Right cardiac atrium (tissue), 5 donors: ENCODE measurements at regions of chrX and their contacts with region 1.

Region 1: DNA sequence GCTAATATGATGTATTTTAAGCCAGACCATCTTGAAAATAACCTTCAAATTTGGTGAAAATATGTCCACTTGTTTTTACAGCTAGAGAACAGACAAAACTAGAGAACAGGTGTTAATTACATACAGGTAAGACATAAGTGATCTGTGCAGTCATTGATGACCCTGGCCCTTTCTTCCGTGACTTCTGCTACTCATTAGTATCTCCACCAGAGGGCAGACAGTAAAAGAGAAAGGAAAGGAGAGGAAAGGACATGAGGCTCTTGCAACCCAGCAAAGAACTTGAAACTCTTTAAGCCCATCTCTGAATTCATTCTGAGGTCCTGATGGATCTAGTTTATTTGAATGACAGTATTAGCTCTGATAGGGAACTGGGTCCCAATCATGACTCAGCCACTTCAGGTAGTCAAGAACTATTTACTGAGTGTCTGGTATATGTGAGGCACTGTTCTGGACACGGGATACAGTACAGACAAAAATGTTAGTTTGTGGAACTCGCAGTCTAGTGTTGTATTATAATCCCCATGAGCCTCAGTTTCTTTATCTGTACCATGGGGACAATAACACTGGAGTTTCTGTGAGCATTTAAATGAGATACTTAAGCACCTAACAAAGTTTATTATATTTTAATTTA is 121.0 kb upstream of the TEX13D start:
- DNase-seq: no peak
- ATAC-seq: peak in 1 of 2 donors; percentile 56
- H3K4me3 ChIP-seq: no peak overlapping the region
- H3K27ac ChIP-seq: no peak overlapping the region
- H3K4me1 ChIP-seq: no peaks in the 10 kb centered on the region
- H3K27me3 ChIP-seq: no peaks in the 10 kb centered on the region

Region 2: DNA sequence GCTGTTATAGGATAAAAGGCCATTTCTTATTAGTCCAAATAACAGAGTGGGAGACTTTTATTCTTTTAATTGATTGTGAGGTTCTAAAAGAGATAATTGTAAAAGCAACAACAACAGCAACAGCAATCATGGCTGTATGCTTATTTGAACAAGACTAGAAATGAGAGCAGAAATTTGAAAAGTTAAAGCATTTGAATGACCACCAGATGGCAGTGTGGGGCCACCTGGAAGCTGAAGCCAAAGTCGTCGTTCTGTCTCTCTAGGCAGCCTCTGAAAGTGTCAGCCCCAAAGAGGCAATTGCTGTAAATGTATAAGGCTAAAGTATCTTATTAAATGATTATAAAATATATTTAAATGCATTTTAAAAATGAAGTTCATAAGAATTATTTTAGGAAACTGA is 177.1 kb after region 1 on chrX:
- intact Hi-C with region 1: loop called in 1 of 4 experiments (anchors 10 kb)
- DNase-seq: peak in 2 of 3 donors; percentile 19 to 64
- ATAC-seq: no peak
- H3K4me3 ChIP-seq: no peak overlapping the region
- H3K27ac ChIP-seq: no peak overlapping the region
- H3K4me1 ChIP-seq: no peaks in the 10 kb centered on the region
- H3K27me3 ChIP-seq: no peaks in the 10 kb centered on the region